ENCODE measurements at regions of chr1 and their contacts with region 1.

Region 1: GRCh38 chr1:28235755-28236655 is at the start of gene ATP5IF1:
- DNase-seq: peak; percentile 100

Region 2: GRCh38 chr1:28259307-28260167 is 23.5 kb after region 1 on chr1 and contains the start of gene SESN2:
- CTCF ChIA-PET with region 1: interaction called, 3 read pairs
- POLR2A ChIA-PET with region 1: interaction called, 15 read pairs
- DNase-seq: peak; percentile 100

Measured in HEK293T (cell line).